PC-3 (cell line): ENCODE measurements at regions of chr10 and their contacts with region 1.

Region 1: DNA sequence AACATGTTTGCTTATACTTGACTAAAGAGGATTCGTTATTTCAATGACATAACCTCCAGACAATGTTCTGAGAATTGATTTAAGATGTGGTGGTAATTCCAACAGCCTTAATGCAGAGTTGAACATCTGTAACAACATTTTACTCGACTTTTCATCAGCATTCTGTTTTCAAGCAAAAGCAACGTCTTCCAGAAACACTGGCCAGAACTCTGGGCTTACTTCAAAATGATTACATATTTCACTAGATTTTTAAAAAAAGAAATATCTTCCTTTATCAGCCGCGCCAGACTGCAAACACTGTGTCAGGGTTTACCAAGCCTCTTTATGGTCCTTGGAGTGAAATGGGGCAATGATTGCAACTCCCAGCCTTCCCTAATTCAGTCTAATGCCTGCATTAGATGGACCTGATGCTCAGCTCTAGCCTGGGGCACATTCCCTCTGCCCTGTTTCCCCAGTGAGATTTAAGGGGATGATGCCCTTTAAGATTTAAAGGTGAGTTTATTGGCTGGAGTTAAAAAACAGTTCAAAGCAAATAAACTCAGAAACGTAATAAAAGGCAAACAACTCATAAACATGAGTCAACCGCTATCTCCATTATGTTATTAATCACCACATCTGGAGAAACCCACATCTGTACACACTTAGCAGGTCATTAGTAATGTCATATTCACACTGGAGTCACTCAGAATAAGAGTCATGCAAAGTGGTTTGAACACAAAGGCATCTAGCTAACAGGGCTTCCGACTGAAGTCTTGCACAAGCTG is 663.9 kb downstream of the KCNMA1 start:
- DNase-seq: peak; percentile 99
- ATAC-seq: peak; percentile 95
- H3K4me3 ChIP-seq: no peak overlapping the region
- H3K27ac ChIP-seq: 0 out of 2 replicates have a peak overlapping the region, but pooled peaks have one; percentile 1
- H3K4me1 ChIP-seq: peaks cover 20% of the 10 kb centered on the region
- H3K27me3 ChIP-seq: no peaks in the 10 kb centered on the region
- CTCF ChIP-seq: no peak

Region 2: GRCh38 chr10:76723844-76724243 is 249.9 kb before region 1 on chr10:
- CTCF ChIA-PET with region 1: no interaction called
- POLR2A ChIA-PET with region 1: no interaction called
- intact Hi-C with region 1: loop called (anchors 2 kb)
- DNase-seq: no peak
- ATAC-seq: no peak
- H3K4me3 ChIP-seq: no peak overlapping the region
- H3K27ac ChIP-seq: no peak overlapping the region
- H3K4me1 ChIP-seq: peaks cover 30% of the 10 kb centered on the region
- H3K27me3 ChIP-seq: peaks cover 20% of the 10 kb centered on the region
- CTCF ChIP-seq: no peak

Region 3: GRCh38 chr10:76868098-76868977 is 105.4 kb before region 1 on chr10:
- CTCF ChIA-PET with region 1: no interaction called
- POLR2A ChIA-PET with region 1: no interaction called
- intact Hi-C with region 1: loop called (anchors 5 kb)
- DNase-seq: peak; percentile 35
- ATAC-seq: peak; percentile 78
- H3K4me3 ChIP-seq: no peak overlapping the region
- H3K27ac ChIP-seq: no peak overlapping the region
- H3K4me1 ChIP-seq: no peaks in the 10 kb centered on the region
- H3K27me3 ChIP-seq: peaks cover 22% of the 10 kb centered on the region; the same call in 1 of the 2 replicates
- CTCF ChIP-seq: no peak

Region 4: DNA sequence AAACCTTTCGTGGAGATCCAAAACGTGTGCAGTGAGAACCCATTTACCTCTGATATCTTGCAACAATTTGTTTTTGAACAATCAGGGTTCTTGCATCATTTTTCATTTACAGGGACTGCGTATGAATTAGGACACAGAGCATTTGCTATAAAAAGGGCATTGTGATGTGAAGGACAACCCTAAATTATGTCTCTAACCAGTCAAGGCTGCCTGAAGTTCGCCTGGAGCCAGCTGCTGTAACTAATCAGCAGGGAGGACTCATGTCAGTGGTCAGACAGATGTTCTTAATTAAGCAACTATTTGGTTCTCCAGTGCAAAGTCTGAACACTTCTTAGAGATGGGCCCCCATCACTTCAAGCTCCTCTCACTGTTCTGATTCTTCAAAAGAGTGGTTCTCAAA is 10.8 kb before region 1 on chr10:
- CTCF ChIA-PET with region 1: no interaction called
- POLR2A ChIA-PET with region 1: interaction called, 23 read pairs
- intact Hi-C with region 1: no loop called
- DNase-seq: no peak
- ATAC-seq: no peak
- H3K4me3 ChIP-seq: no peak overlapping the region
- H3K27ac ChIP-seq: no peak overlapping the region
- H3K4me1 ChIP-seq: no peaks in the 10 kb centered on the region
- H3K27me3 ChIP-seq: no peaks in the 10 kb centered on the region
- CTCF ChIP-seq: no peak

Region 5: GRCh38 chr10:77004917-77005564 is 31.3 kb after region 1 on chr10:
- CTCF ChIA-PET with region 1: no interaction called
- POLR2A ChIA-PET with region 1: no interaction called
- intact Hi-C with region 1: loop called (anchors 5 kb)
- DNase-seq: peak; percentile 99
- ATAC-seq: peak; percentile 89
- H3K4me3 ChIP-seq: no peak overlapping the region
- H3K27ac ChIP-seq: no peak overlapping the region
- H3K4me1 ChIP-seq: peaks cover 4% of the 10 kb centered on the region; the same call in 1 of the 2 replicates
- H3K27me3 ChIP-seq: no peaks in the 10 kb centered on the region
- CTCF ChIP-seq: peak; percentile 100